Posterior cingulate gyrus (tissue), 11 donors: ENCODE measurements at regions of chr4 and their contacts with region 1.

Region 1: DNA sequence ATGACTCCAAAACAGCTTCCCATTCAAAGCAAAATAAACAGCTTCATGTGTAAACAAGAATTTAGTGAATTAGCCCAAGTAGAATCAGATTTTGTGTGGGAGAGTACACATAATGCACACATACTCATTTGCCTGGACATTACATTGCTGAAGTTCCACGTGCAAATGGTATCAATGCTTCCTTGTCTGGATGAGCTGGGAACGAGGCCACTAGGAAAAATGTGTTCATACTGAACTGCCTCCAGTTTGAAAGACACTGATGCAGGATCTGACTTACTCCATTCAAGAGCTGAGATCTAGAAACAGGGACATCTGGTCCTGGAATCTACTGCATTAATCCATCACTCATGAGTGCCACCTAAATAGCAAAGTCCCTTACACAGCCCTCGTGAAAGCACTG is 228.0 kb downstream of the APBB2 start:
- DNase-seq: peak in 3 of 10 donors; percentile 11 to 42 (median 39)

Region 2: DNA sequence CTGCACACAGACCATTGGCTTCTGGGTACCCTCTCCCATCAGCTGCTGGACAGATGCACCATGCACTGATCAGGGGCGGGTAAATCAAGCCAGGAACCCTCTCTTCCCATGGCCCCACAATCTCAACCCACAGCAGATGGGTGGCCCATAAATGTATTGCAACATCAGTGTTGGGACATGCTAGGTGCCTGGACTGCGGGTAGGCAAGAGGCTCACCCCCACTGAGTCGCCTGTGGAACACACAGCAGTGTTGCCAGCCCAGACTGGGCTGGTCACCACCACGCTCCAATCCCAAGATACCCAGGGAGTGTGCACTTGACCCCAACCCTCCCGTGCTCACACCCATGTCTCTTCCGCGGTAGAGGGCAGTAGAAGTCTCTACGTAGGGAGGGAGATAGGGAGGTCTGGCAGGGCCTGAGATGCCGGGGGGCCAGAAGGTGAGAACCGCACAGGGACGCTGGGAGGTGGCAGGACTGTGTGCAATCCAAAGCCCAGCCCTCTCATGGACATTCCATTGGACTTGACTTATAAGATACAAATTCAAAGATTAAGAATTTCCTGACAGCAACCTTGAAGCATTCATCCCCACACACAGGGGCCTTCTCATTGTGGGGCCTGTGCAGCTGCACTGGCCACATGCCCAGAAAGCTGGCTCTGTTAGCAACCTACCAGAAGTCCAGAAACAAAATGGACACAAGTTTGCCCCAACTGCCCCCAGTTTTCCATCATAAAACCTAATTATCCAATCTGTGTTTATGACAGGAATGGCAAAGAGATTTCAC is 52.9 kb before region 1 on chr4:
- intact Hi-C with region 1: loop called (anchors 1 kb)
- DNase-seq: peak in 9 of 10 donors; percentile 46 to 97 (median 76)

Region 3: DNA sequence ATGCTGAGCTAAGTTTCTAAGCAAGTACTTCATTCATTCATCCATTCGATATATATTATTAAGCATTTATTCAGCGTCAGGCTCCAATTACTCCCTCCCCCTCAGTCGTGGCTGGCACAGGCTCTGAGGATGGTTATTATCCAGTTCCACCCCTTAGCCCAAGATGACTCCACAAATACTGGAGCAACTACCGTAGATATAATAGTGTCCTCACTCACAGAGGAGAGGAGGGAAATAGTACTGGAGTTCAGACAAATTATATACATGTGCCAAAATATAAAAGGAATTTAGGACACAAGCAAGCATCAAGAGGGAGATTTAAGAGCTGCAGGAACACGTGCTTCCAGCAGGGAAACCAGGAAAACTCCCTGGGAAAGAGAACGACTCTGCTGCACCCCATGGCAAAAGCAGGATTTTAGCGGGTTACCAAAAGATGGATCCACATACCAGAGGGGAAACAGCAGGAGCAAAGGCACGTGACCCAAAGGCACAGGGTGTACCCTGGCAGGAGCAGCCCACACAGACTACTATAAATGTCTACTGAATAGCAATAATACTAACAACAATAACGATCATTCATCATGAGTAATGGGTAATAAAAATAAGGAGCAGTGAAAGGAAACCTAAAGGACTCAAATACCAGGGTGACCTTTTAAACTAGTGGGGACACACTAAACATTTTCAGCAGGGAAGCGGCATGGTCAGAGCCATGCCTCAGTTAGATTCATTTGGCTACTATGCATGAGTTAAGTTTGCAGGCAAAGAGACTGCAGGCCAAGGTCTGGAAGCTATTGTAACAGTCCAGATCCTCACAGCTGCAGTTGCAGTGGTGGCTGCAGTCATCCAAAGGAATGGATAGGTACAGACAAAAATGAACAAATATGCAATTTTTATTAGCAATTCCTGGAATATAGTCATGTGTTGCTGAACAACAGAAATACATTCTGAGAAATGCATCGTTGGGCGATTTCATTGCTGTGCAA is 74.3 kb after region 1 on chr4:
- intact Hi-C with region 1: loop called (anchors 5 kb)
- DNase-seq: peak in 5 of 10 donors; percentile 18 to 61 (median 37)